CD14-positive monocyte (primary cell): ENCODE measurements at regions of chr19 and their contacts with region 1.

Region 1: DNA sequence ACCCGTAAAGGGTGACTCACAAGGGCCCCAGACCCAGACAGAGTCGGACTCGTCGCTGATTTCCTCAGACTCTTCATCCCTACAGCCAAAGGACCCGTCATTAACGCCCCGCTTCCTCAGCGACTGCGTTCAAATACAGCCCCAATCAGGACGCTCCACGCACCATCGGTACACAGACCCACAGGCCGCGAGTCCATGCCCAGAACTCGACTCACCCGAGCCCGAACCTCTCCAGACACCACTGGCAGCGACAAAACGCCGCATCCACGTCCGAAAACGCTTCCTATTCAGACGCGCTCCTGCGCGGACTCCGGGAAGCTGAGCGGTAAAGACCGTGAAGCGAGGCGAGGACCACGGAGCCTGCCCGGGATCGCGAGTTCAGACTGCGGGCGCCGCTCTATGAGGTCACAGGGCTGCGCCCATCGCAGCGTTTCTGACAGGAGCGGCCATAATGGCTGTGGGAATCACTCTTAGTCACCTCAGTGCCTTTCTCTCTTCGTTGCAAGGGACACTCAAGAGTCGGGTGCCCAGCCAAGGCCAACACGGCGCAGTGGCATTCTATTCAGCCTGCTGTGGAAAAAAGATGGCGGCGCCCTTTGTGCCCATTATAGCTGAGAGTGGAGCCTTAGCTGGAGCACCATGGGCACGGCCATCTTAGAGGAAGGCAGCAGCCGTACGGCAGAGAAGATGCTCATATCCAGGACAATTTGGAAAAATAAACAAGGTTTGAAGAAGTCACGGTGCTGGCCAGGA is at the start of gene ZNF614:
- DNase-seq: peak; percentile 85 to 92 (median 87)
- H3K4me3 ChIP-seq: peak within 1 kb of the TSS; percentile 81 to 90 (median 84)
- H3K4me3 Mint-ChIP-seq: peak within 1 kb of the TSS; percentile 92 to 98
- H3K27ac ChIP-seq: peak within 1 kb of the TSS; percentile 95 to 98
- H3K27ac Mint-ChIP-seq: peak within 1 kb of the TSS; percentile 95 to 99 (median 98)
- H3K4me1 ChIP-seq: peaks cover 11 to 17% of the 10 kb centered on the region in 2 donors
- H3K4me1 Mint-ChIP-seq: peaks cover 21% of the 10 kb centered on the region
- H3K27me3 ChIP-seq: no peaks in the 10 kb centered on the region
- H3K27me3 Mint-ChIP-seq: no peaks in the 10 kb centered on the region
- CTCF ChIP-seq: no peak
- polyA plus RNA-seq, gene ZNF614: 0.65 to 3.1 (median 1.0) TPM

Region 2: GRCh38 chr19:52171321-52172169 is 143.3 kb after region 1 on chr19 and contains the start of gene ZNF836:
- intact Hi-C with region 1: no loop called
- DNase-seq: peak; percentile 62 to 71 (median 69)
- H3K4me3 ChIP-seq: peak within 1 kb of the TSS; percentile 66 to 98 (median 87)
- H3K4me3 Mint-ChIP-seq: peak within 1 kb of the TSS; percentile 99 to 100
- H3K27ac ChIP-seq: peak within 1 kb of the TSS; percentile 47 to 88
- H3K27ac Mint-ChIP-seq: peak within 1 kb of the TSS; percentile 89 to 96 (median 94)
- H3K4me1 ChIP-seq: peaks cover 12 to 17% of the 10 kb centered on the region in 2 donors
- H3K4me1 Mint-ChIP-seq: peaks cover 20% of the 10 kb centered on the region
- H3K27me3 ChIP-seq: no peaks in the 10 kb centered on the region
- H3K27me3 Mint-ChIP-seq: peaks cover 5 to 11% (median 5%) of the 10 kb centered on the region in 3 donors
- CTCF ChIP-seq: no peak
- polyA plus RNA-seq, gene ZNF836: 2.3 to 4.8 (median 2.6) TPM

Region 3: DNA sequence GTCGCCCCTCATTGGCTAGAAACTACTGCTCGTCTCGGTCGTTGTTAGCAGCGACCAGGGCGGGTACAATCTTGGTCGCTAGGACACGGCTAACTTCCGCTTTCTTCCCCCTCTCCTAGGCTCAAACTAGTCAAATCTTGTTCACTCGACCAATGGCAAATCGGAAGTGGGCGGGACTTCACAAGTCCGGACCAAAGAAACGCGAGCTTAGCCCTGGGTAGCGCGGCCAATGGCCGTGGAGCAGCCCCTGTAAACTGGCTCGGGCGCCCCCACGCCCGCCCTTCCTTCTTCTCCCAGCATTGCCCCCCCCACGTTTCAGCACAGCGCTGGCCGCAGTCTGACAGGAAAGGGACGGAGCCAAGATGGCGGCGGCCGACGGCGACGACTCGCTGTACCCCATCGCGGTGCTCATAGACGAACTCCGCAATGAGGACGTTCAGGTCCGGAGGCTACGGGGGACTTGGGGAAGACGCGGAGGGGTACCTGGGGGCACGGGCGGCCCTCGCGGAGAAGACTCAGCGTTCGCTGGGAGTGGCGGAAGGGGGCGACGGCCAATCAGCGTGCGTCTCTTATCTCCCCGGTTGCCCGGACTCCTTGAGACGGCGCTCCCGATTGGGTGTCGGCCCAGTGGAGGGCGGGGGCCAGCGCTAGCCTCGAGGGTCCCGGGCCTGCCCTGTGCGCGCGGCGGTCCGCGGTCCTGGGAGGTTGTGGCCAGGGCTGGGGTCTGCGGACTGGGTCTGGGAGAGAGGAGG is 161.7 kb after region 1 on chr19 and contains the start of gene PPP2R1A:
- intact Hi-C with region 1: loop called in 1 of 2 experiments (anchors 10 kb)
- DNase-seq: peak; percentile 100
- H3K4me3 ChIP-seq: peak within 1 kb of the TSS; percentile 85 to 94 (median 88)
- H3K4me3 Mint-ChIP-seq: peak within 1 kb of the TSS; percentile 90 to 99
- H3K27ac ChIP-seq: peak within 1 kb of the TSS; percentile 95 to 99
- H3K27ac Mint-ChIP-seq: peak within 1 kb of the TSS; percentile 98 to 100 (median 100)
- H3K4me1 ChIP-seq: peaks cover 20 to 24% of the 10 kb centered on the region in 2 donors
- H3K4me1 Mint-ChIP-seq: peaks cover 32% of the 10 kb centered on the region
- H3K27me3 ChIP-seq: no peaks in the 10 kb centered on the region
- H3K27me3 Mint-ChIP-seq: peaks cover 1 to 6% (median 4%) of the 10 kb centered on the region in 3 donors
- CTCF ChIP-seq: no peak
- polyA plus RNA-seq, gene PPP2R1A: 79.9 to 151 (median 127) TPM